Heart right ventricle (tissue), 16 donors: ENCODE measurements at regions of chr1 and their contacts with region 1.

Region 1: GRCh38 chr1:15994590-15995351 is 9.3 kb upstream of the SRARP start:
- DNase-seq: peak; percentile 46 to 66
- ATAC-seq: peak; percentile 71 to 87 (median 78)
- H3K4me3 ChIP-seq: no peak overlapping the region
- H3K27ac ChIP-seq: no peak overlapping the region
- H3K4me1 ChIP-seq: no peaks in the 10 kb centered on the region
- H3K27me3 ChIP-seq: no peaks in the 10 kb centered on the region
- CTCF ChIP-seq: peak; percentile 56 to 84 (median 77)

Region 2: GRCh38 chr1:15788624-15789301 is 206.0 kb before region 1 on chr1:
- intact Hi-C with region 1: loop called in 5 of 10 experiments (anchors 1 to 5 kb)
- DNase-seq: no peak
- ATAC-seq: no peak
- H3K4me3 ChIP-seq: no peak overlapping the region
- H3K27ac ChIP-seq: peak overlapping the region in 1 of 10 donors; percentile 10
- H3K4me1 ChIP-seq: peaks cover 0 to 22% (median 10%) of the 10 kb centered on the region in 9 donors
- H3K27me3 ChIP-seq: no peaks in the 10 kb centered on the region
- CTCF ChIP-seq: no peak

Region 3: DNA sequence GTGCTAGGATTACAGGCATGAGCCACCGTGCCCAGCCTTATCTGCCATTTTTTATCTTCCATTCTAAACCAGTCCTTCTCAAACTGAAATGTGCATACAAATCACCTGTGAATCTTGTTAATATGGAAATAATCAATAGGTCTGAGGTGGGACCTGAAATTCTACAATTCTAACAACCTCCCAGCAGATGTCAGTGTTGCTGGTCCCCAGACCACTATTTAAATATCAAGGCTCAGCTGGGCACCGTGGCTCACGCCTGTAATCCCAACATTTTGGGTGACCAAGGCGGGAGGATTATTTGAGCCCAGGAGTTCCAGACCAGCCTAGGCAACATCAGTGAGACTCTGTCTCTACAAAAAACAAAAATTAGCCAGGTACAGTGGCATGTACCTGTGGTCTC is 191.4 kb before region 1 on chr1:
- intact Hi-C with region 1: loop called in 3 of 10 experiments (anchors 5 kb)
- DNase-seq: no peak
- ATAC-seq: peak in 1 of 8 donors; percentile 38
- H3K4me3 ChIP-seq: no peak overlapping the region
- H3K27ac ChIP-seq: no peak overlapping the region
- H3K4me1 ChIP-seq: peaks cover 4 to 25% (median 17%) of the 10 kb centered on the region in 9 donors
- H3K27me3 ChIP-seq: peaks cover 0 to 6% (median 0%) of the 10 kb centered on the region in 7 donors
- CTCF ChIP-seq: peak in 7 of 9 donors; percentile 33 to 58 (median 46)

Region 4: GRCh38 chr1:15810073-15810472 is 184.7 kb before region 1 on chr1:
- intact Hi-C with region 1: loop called in 6 of 10 experiments (anchors 2 to 5 kb)
- DNase-seq: no peak
- ATAC-seq: no peak
- H3K4me3 ChIP-seq: no peak overlapping the region
- H3K27ac ChIP-seq: no peak overlapping the region
- H3K4me1 ChIP-seq: no peaks in the 10 kb centered on the region
- H3K27me3 ChIP-seq: no peaks in the 10 kb centered on the region
- CTCF ChIP-seq: no peak

Region 5: DNA sequence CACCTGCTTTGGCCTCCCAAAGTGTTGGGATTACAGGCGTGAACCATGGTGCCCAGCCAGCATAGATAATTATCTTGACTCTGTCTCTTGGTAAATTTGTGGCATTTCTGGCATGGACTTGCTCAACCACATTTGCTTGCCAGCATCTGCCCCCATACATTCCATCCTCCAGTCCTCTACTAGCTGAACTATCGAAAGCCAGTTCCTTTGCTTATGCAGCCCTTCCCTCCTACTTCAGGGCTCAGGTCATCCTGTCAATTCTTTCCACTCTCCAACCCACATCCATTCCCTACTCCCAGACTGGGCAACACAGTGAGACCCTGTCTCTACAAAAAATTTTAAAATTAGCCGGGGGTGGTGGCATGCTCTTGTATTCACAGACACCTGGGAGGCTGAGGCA is 174.3 kb before region 1 on chr1:
- intact Hi-C with region 1: loop called in 5 of 10 experiments (anchors 2 to 5 kb)
- DNase-seq: no peak
- ATAC-seq: no peak
- H3K4me3 ChIP-seq: no peak overlapping the region
- H3K27ac ChIP-seq: no peak overlapping the region
- H3K4me1 ChIP-seq: peaks cover 0 to 12% (median 5%) of the 10 kb centered on the region in 9 donors
- H3K27me3 ChIP-seq: no peaks in the 10 kb centered on the region
- CTCF ChIP-seq: no peak